ENCODE measurements at regions of chr22 and their contacts with region 1.

Region 1: GRCh38 chr22:31290494-31291471 is 1.5 kb downstream of the PIK3IP1 start:
- DNase-seq: peak; percentile 89
- ATAC-seq: peak; percentile 86
- H3K4me3 Mint-ChIP-seq: peak overlapping the region; percentile 92
- H3K27ac Mint-ChIP-seq: peak overlapping the region; percentile 100
- H3K4me1 Mint-ChIP-seq: peaks cover 80% of the 10 kb centered on the region
- H3K27me3 Mint-ChIP-seq: no peaks in the 10 kb centered on the region
- CTCF ChIP-seq: no peak

Region 2: DNA sequence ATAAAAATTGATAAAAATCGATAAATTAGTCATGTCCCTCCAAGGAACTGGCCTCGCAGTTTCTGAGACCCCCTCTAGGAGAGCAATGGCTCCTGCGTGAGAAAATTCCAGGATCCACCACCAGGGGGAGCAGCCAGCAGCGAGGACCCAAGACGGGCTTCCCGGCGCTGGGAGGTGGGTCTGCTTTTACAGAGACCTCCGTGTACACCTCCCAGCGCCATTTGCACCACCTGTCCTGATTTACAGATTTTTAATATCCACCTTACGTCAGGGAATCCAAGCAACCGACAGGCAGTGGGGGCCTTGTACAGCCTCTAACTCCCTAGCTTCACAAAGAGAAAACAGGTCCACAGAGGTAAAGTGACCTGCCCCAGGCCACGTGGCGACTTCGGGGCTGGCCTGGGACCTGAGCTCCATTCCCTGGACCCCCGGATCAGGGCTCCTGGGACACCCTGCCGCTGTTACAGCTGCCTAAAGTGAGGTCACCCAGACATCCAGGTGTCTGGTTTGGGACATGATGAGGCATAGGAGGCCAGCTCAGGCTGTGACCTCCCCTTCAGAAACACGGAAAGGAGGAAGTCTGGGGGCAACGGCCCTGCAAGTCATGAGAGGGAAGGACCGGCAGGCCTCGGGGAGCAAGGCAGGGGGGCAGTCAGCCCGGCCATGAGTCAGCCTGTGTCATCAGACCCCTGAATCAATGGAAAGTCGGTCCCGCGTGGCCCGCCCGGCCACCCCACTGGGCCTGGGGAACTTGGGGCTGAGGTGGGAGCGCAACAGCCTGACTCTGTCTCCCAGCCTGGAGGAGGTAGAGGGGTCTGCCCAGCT is 1027.7 kb before region 1 on chr22:
- CTCF ChIA-PET with region 1: no interaction called
- POLR2A ChIA-PET with region 1: no interaction called
- intact Hi-C with region 1: loop called (anchors 2 kb)
- DNase-seq: peak; percentile 72
- ATAC-seq: peak; percentile 13
- H3K4me3 Mint-ChIP-seq: peak overlapping the region; percentile 59
- H3K27ac Mint-ChIP-seq: peak overlapping the region; percentile 18
- H3K4me1 Mint-ChIP-seq: peaks cover 27% of the 10 kb centered on the region
- H3K27me3 Mint-ChIP-seq: no peaks in the 10 kb centered on the region
- CTCF ChIP-seq: peak; percentile 97

Region 3: DNA sequence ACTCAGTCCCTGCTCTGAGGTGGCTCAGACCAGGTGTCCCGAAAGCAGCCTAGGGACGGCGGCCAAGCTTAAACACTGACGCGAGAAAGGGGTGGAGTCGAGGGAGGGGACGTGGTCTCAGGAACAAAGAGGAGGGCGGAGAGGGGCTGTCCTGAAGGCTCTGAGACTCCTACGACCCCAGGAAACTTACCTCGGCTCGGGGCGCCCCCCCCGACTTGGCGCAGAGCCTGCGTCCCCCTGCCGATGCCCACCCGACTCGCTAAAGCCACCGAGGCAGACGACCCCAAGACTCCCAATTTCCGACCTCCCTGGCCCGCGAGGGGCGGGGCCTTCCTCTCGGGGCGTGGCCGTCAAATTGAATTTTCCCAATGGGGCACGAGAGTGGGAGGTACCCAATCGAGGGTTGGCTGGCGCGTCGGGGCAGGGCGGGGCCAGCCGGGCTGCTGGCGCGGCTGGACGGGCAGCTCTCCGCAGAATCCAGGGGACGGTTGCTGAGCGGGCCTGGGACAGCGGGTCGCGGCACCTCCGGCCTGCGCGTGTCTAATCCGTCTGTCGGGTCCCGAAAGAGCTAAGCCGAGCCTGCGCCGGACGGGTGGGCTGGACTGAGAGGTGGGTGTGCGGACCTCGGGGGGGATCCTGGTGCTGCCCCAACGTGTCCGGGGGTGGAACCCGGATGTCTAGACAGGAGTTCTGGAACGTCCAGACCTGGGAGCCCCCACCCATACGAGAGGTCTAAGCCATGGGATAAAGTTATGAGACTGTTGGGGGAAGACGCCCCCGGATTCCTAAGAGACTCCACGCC is 209.7 kb before region 1 on chr22 and contains the start of gene SMTN:
- CTCF ChIA-PET with region 1: no interaction called
- POLR2A ChIA-PET with region 1: interaction called, 11 read pairs
- intact Hi-C with region 1: loop called (anchors 2 kb)
- DNase-seq: peak; percentile 93
- ATAC-seq: peak; percentile 75
- H3K4me3 Mint-ChIP-seq: peak within 1 kb of the TSS; percentile 90
- H3K27ac Mint-ChIP-seq: no peak within 1 kb of the TSS
- H3K4me1 Mint-ChIP-seq: peaks cover 36% of the 10 kb centered on the region
- H3K27me3 Mint-ChIP-seq: no peaks in the 10 kb centered on the region
- CTCF ChIP-seq: no peak
- total RNA-seq, gene SMTN: 2.8 and 3.1 TPM in 2 replicates

Region 4: DNA sequence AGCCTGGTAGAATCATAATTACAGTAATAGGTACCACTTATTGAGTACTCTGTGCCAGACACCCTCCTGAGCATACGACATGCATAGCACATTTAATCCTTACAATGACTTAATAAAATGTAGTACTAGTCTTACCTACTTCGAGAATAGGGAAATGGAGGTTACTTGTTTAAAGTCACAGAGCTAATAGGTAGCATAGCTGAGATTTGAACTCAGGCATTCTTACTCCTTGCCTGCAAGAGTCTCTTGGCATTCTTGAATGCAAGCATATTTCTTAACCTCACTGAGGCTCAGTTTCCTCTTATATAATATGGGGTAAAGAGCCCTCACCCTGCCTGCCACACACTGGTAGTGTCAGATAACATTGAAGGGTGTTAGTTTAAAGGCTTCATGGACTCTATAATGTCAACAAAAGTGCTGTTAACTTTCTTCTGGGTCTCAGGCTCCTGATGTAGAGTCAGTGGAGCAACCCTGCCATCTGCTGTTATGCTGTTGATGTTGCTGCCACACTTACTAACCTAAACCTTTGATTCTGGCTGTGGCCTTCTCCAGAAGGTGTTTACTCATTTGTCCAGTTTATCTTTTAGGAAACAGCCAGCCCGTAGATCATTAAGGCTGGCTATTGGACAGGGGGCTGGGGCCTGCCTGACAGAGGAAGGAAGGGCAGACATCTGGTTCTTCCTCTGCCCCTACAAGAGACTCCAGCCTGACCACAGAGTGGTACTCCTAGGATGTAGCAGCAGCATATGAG is 59.7 kb before region 1 on chr22:
- CTCF ChIA-PET with region 1: no interaction called
- POLR2A ChIA-PET with region 1: no interaction called
- intact Hi-C with region 1: no loop called
- DNase-seq: no peak
- ATAC-seq: peak; percentile 52
- H3K4me3 Mint-ChIP-seq: no peak overlapping the region
- H3K27ac Mint-ChIP-seq: no peak overlapping the region
- H3K4me1 Mint-ChIP-seq: peaks cover 23% of the 10 kb centered on the region
- H3K27me3 Mint-ChIP-seq: no peaks in the 10 kb centered on the region
- CTCF ChIP-seq: no peak

Region 5: GRCh38 chr22:31272522-31273446 is 18.0 kb before region 1 on chr22:
- CTCF ChIA-PET with region 1: interaction called, 12 read pairs
- POLR2A ChIA-PET with region 1: interaction called, 16 read pairs
- intact Hi-C with region 1: loop called (anchors 2 kb)
- DNase-seq: no peak
- ATAC-seq: peak; percentile 64
- H3K4me3 Mint-ChIP-seq: no peak overlapping the region
- H3K27ac Mint-ChIP-seq: no peak overlapping the region
- H3K4me1 Mint-ChIP-seq: no peaks in the 10 kb centered on the region
- H3K27me3 Mint-ChIP-seq: no peaks in the 10 kb centered on the region
- CTCF ChIP-seq: peak; percentile 46

Region 6: GRCh38 chr22:31313366-31314147 is 22.8 kb after region 1 on chr22:
- CTCF ChIA-PET with region 1: interaction called, 44 read pairs
- POLR2A ChIA-PET with region 1: interaction called, 11 read pairs
- intact Hi-C with region 1: loop called (anchors 1 kb)
- DNase-seq: peak; percentile 39
- ATAC-seq: peak; percentile 54
- H3K4me3 Mint-ChIP-seq: no peak overlapping the region
- H3K27ac Mint-ChIP-seq: no peak overlapping the region
- H3K4me1 Mint-ChIP-seq: peaks cover 7% of the 10 kb centered on the region
- H3K27me3 Mint-ChIP-seq: no peaks in the 10 kb centered on the region
- CTCF ChIP-seq: no peak

Region 7: DNA sequence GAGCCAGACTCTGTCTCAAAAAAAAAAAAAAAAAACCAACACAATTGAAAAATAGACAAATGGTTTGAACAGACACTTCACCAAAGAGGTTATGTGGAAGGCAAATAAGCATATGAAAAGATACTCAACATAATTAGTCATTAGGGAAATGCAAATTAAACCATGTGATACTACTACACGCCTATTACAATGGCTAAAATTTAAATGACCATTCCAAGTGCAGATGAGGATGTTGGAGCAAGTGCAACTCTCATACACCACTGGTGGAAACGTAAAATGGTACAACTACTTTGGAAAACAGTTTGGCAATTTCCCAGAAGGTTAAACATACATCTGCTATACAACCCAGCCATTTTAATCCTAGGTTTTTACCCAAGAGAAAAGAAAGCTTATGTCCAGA is 174.5 kb after region 1 on chr22:
- CTCF ChIA-PET with region 1: no interaction called
- POLR2A ChIA-PET with region 1: no interaction called
- intact Hi-C with region 1: no loop called
- DNase-seq: no peak
- ATAC-seq: no peak
- H3K4me3 Mint-ChIP-seq: no peak overlapping the region
- H3K27ac Mint-ChIP-seq: no peak overlapping the region
- H3K4me1 Mint-ChIP-seq: no peaks in the 10 kb centered on the region
- H3K27me3 Mint-ChIP-seq: no peaks in the 10 kb centered on the region
- CTCF ChIP-seq: no peak

Region 8: GRCh38 chr22:31489604-31490495 is 199.1 kb after region 1 on chr22 and contains the start of gene EIF4ENIF1:
- CTCF ChIA-PET with region 1: no interaction called
- POLR2A ChIA-PET with region 1: interaction called, 7 read pairs
- intact Hi-C with region 1: loop called (anchors 2 kb)
- DNase-seq: peak; percentile 82
- ATAC-seq: peak; percentile 66
- H3K4me3 Mint-ChIP-seq: peak within 1 kb of the TSS; percentile 93
- H3K27ac Mint-ChIP-seq: peak within 1 kb of the TSS; percentile 100
- H3K4me1 Mint-ChIP-seq: peaks cover 54% of the 10 kb centered on the region
- H3K27me3 Mint-ChIP-seq: no peaks in the 10 kb centered on the region
- CTCF ChIP-seq: no peak
- total RNA-seq, gene EIF4ENIF1: 46.4 and 53.6 TPM in 2 replicates

Measured in activated B cell treated with CpG ODN at 0.5 μM for 24 hours (primary cell).